ENCODE measurements at regions of chr19 and their contacts with region 1.

Region 1: GRCh38 chr19:47697863-47698609 is 15.2 kb upstream of the EHD2 start:
- DNase-seq: peak in 8 of 9 experiments; percentile 25 to 71 (median 49)
- ATAC-seq: peak; percentile 85
- H3K4me3 ChIP-seq: no peak overlapping the region
- H3K4me3 Mint-ChIP-seq: no peak overlapping the region
- H3K27ac ChIP-seq: no peak overlapping the region
- H3K27ac Mint-ChIP-seq: no peak overlapping the region
- H3K4me1 ChIP-seq: no peaks in the 10 kb centered on the region
- H3K4me1 Mint-ChIP-seq: peaks cover 5% of the 10 kb centered on the region
- H3K27me3 ChIP-seq: no peaks in the 10 kb centered on the region
- H3K27me3 Mint-ChIP-seq: no peaks in the 10 kb centered on the region
- CTCF ChIP-seq: peak; percentile 93

Region 2: GRCh38 chr19:47296036-47296435 is 402.0 kb before region 1 on chr19:
- CTCF ChIA-PET with region 1: interaction called, 5 read pairs
- POLR2A ChIA-PET with region 1: no interaction called
- intact Hi-C with region 1: loop called in 1 of 2 experiments (anchors 1 kb)
- DNase-seq: peak; percentile 41 to 87 (median 76)
- ATAC-seq: peak; percentile 91
- H3K4me3 ChIP-seq: no peak overlapping the region
- H3K4me3 Mint-ChIP-seq: no peak overlapping the region
- H3K27ac ChIP-seq: no peak overlapping the region
- H3K27ac Mint-ChIP-seq: no peak overlapping the region
- H3K4me1 ChIP-seq: no peaks in the 10 kb centered on the region
- H3K4me1 Mint-ChIP-seq: peaks cover 3% of the 10 kb centered on the region
- H3K27me3 ChIP-seq: no peaks in the 10 kb centered on the region
- H3K27me3 Mint-ChIP-seq: no peaks in the 10 kb centered on the region
- CTCF ChIP-seq: peak; percentile 68

Region 3: GRCh38 chr19:47428177-47428894 is 269.7 kb before region 1 on chr19:
- CTCF ChIA-PET with region 1: interaction called, 423 read pairs
- POLR2A ChIA-PET with region 1: no interaction called
- intact Hi-C with region 1: no loop called
- DNase-seq: peak; percentile 56 to 94 (median 74)
- ATAC-seq: peak; percentile 86
- H3K4me3 ChIP-seq: peak overlapping the region in 1 of 2 experiments; percentile 2
- H3K4me3 Mint-ChIP-seq: no peak overlapping the region
- H3K27ac ChIP-seq: no peak overlapping the region
- H3K27ac Mint-ChIP-seq: no peak overlapping the region
- H3K4me1 ChIP-seq: peaks cover 33% of the 10 kb centered on the region
- H3K4me1 Mint-ChIP-seq: peaks cover 12% of the 10 kb centered on the region
- H3K27me3 ChIP-seq: peaks cover 20 to 34% of the 10 kb centered on the region in 2 experiments
- H3K27me3 Mint-ChIP-seq: peaks cover 56% of the 10 kb centered on the region
- CTCF ChIP-seq: no peak

Region 4: GRCh38 chr19:47436712-47437401 is 261.2 kb before region 1 on chr19:
- CTCF ChIA-PET with region 1: interaction called, 423 read pairs
- POLR2A ChIA-PET with region 1: interaction called, 4 read pairs
- intact Hi-C with region 1: loop called (anchors 1 kb)
- DNase-seq: peak; percentile 66 to 92 (median 85)
- ATAC-seq: peak; percentile 96
- H3K4me3 ChIP-seq: no peak overlapping the region
- H3K4me3 Mint-ChIP-seq: no peak overlapping the region
- H3K27ac ChIP-seq: no peak overlapping the region
- H3K27ac Mint-ChIP-seq: no peak overlapping the region
- H3K4me1 ChIP-seq: no peaks in the 10 kb centered on the region
- H3K4me1 Mint-ChIP-seq: peaks cover 11% of the 10 kb centered on the region
- H3K27me3 ChIP-seq: peaks cover 7 to 18% of the 10 kb centered on the region in 2 experiments
- H3K27me3 Mint-ChIP-seq: peaks cover 60% of the 10 kb centered on the region
- CTCF ChIP-seq: peak; percentile 86

Region 5: DNA sequence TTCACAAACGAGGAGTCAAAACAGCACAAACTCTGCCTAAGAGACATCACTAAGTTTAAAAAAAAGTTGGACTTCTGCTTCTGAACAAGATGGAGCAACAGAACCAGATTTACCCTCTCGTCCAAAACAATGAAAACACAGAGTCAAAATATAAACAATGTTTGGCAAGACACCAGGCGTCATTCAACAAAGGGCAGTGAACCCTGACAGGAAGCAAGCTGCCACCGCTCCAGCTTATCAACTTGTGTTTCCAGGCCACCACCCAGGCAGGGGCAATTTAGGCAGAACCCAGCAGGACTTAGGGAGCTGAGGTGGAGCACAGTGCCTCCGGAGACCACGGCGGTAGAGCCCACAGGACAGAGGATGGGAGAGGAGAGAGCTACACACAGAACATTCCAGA is 174.6 kb before region 1 on chr19:
- CTCF ChIA-PET with region 1: interaction called, 4 read pairs
- POLR2A ChIA-PET with region 1: no interaction called
- intact Hi-C with region 1: loop called (anchors 10 kb)
- DNase-seq: no peak
- ATAC-seq: no peak
- H3K4me3 ChIP-seq: no peak overlapping the region
- H3K4me3 Mint-ChIP-seq: no peak overlapping the region
- H3K27ac ChIP-seq: no peak overlapping the region
- H3K27ac Mint-ChIP-seq: no peak overlapping the region
- H3K4me1 ChIP-seq: peaks cover 26% of the 10 kb centered on the region
- H3K4me1 Mint-ChIP-seq: peaks cover 30% of the 10 kb centered on the region
- H3K27me3 ChIP-seq: no peaks in the 10 kb centered on the region
- H3K27me3 Mint-ChIP-seq: peaks cover 8% of the 10 kb centered on the region
- CTCF ChIP-seq: no peak

Region 6: GRCh38 chr19:47540728-47541127 is 157.3 kb before region 1 on chr19:
- CTCF ChIA-PET with region 1: no interaction called
- POLR2A ChIA-PET with region 1: no interaction called
- intact Hi-C with region 1: loop called in 1 of 2 experiments (anchors 2 kb)
- DNase-seq: peak in 2 of 9 experiments; percentile 42 to 63
- ATAC-seq: no peak
- H3K4me3 ChIP-seq: no peak overlapping the region
- H3K4me3 Mint-ChIP-seq: no peak overlapping the region
- H3K27ac ChIP-seq: peak overlapping the region in 1 of 2 experiments; percentile 65
- H3K27ac Mint-ChIP-seq: peak overlapping the region; percentile 90
- H3K4me1 ChIP-seq: peaks cover 25% of the 10 kb centered on the region
- H3K4me1 Mint-ChIP-seq: peaks cover 21% of the 10 kb centered on the region
- H3K27me3 ChIP-seq: peaks cover 0 to 11% of the 10 kb centered on the region in 2 experiments
- H3K27me3 Mint-ChIP-seq: peaks cover 6% of the 10 kb centered on the region
- CTCF ChIP-seq: no peak

Region 7: DNA sequence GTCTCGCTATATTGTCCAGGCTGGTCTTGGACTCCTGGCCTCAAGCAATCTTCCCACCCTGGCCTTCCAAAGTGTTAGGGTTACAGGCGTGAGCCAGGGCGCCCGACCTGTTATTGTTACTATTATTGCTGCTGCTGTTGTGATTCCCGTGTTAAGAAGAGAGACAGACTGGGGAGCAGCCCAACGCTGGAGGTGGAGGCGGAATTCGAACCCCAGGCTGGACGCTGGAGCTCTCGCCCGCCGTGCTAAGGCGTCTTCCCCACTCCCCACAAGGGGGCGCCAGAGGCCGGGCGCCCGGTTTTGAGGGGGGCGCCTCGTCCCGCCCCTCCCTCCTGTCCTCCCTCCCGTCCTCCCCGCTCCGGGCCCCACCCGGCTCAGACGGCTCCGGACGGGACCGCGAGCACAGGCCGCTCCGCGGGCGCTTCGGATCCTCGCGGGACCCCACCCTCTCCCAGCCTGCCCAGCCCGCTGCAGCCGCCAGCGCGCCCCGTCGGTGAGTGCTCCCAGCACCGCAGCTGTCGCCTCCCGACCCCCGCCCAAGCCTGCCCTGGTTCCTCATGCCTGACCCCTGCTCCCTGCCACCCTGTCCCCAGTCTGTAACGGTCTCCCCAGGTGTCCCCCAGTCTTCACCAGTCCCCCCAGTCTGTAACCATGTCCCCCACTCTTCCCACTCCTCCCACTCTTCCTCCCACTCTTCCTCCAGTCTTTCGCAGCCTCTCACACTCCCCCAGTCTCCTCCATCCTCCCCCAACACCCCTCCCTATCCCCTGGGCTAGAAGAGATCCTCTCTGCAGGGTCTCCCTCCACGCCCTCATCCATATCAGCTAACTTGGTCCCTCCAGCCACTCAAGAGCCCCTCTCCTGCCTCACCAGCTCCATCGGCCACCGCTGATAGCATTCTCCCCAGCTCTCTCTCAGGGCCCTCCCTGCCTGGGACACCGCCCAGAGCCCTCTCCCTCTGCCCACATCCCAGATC is 15.3 kb after region 1 on chr19 and contains the start of gene EHD2:
- CTCF ChIA-PET with region 1: interaction called, 10 read pairs
- POLR2A ChIA-PET with region 1: no interaction called
- intact Hi-C with region 1: no loop called
- DNase-seq: peak in 7 of 9 experiments; percentile 11 to 67 (median 50)
- ATAC-seq: peak; percentile 65
- H3K4me3 ChIP-seq: no peak within 1 kb of the TSS
- H3K4me3 Mint-ChIP-seq: no peak within 1 kb of the TSS
- H3K27ac ChIP-seq: no peak within 1 kb of the TSS
- H3K27ac Mint-ChIP-seq: no peak within 1 kb of the TSS
- H3K4me1 ChIP-seq: no peaks in the 10 kb centered on the region
- H3K4me1 Mint-ChIP-seq: peaks cover 2% of the 10 kb centered on the region
- H3K27me3 ChIP-seq: peaks cover 0 to 16% of the 10 kb centered on the region in 2 experiments
- H3K27me3 Mint-ChIP-seq: peaks cover 40% of the 10 kb centered on the region
- CTCF ChIP-seq: peak; percentile 85
- total RNA-seq, gene EHD2: 0.25 TPM in 1 of 2 experiments, not detected in the other

Region 8: DNA sequence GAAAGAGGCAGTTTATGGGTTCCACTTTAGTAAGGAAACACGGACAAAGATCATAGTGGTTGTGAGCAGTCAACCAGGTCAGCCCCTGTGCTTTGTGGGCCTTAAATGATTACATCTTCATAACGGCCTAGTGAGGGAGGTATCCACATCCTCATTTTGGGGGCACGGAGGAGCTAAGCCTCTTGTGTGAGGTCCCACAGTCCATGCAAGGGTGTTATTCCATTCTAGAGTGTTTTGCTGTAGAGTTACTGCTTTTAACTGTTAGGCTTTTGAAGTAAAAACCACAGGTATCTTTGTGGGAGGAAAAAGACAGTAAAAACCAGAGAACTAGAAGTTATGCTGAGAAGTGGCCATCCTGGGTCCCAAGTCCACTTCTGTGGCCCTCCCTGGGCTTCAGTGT is 51.3 kb after region 1 on chr19:
- CTCF ChIA-PET with region 1: no interaction called
- POLR2A ChIA-PET with region 1: no interaction called
- intact Hi-C with region 1: no loop called
- DNase-seq: no peak
- ATAC-seq: no peak
- H3K4me3 ChIP-seq: no peak overlapping the region
- H3K4me3 Mint-ChIP-seq: peak overlapping the region; percentile 73
- H3K27ac ChIP-seq: no peak overlapping the region
- H3K27ac Mint-ChIP-seq: peak overlapping the region; percentile 63
- H3K4me1 ChIP-seq: peaks cover 59% of the 10 kb centered on the region
- H3K4me1 Mint-ChIP-seq: peaks cover 40% of the 10 kb centered on the region
- H3K27me3 ChIP-seq: no peaks in the 10 kb centered on the region
- H3K27me3 Mint-ChIP-seq: no peaks in the 10 kb centered on the region
- CTCF ChIP-seq: no peak